Prostate gland (tissue), 2 donors: ENCODE measurements at regions of chr16 and their contacts with region 1.

Region 1: DNA sequence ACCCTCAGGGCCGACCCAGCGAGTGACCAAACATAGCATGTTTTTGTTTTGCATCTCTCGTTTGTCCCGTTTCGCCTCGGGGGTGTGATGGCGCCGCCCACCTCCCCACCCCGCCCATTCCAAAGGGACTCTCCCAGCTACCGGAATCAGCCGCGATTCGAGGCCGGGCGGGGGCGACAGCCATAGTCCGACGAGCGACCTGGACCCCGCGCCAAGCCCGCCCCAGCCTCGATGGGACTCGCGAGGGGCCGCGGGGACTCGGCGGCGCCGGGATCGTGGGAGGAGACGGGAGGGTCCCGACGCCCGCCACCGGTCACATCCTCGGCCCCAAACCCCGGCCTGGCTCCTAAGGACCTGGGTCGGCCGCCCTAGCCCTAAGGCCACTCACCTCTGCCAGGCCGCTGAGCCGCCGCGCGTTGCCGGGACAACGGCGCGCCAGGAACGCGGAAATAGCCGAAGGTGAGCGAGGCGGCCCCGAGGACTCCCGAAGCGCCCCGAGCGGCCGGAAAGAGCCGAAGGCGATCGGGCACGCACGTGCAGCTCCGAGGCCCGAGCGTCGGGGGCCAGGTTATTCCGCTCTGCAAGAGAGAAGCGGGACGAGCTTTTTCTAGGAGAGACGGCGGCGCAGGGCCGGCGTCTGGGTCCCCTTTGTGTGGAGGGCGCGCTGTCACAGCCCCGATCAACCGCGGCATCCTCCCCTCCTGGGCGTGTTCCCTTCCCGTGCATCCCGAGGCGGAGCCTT is 1.4 kb downstream of the IFT140 start:
- DNase-seq: peak; percentile 88
- H3K4me3 ChIP-seq: peak overlapping the region; percentile 77 to 84
- H3K27ac ChIP-seq: peak overlapping the region; percentile 81 to 83
- H3K4me1 ChIP-seq: peaks cover 5% of the 10 kb centered on the region
- H3K27me3 ChIP-seq: no peaks in the 10 kb centered on the region
- CTCF ChIP-seq: no peak
- POLR2A ChIP-seq: peak; percentile 17

Region 2: GRCh38 chr16:1413684-1414531 is 196.5 kb before region 1 on chr16:
- intact Hi-C with region 1: loop called (anchors 10 kb)
- DNase-seq: no peak
- H3K4me3 ChIP-seq: peak overlapping the region; percentile 95 to 98
- H3K27ac ChIP-seq: peak overlapping the region; percentile 84 to 87
- H3K4me1 ChIP-seq: no peaks in the 10 kb centered on the region
- H3K27me3 ChIP-seq: no peaks in the 10 kb centered on the region
- CTCF ChIP-seq: peak; percentile 25 to 60 (median 47)
- POLR2A ChIP-seq: no peak

Region 3: GRCh38 chr16:1474796-1475551 is 135.5 kb before region 1 on chr16 and contains the start of gene CLCN7:
- intact Hi-C with region 1: loop called (anchors 5 kb)
- DNase-seq: peak; percentile 90
- H3K4me3 ChIP-seq: peak within 1 kb of the TSS; percentile 90 to 99
- H3K27ac ChIP-seq: peak within 1 kb of the TSS; percentile 81 to 86
- H3K4me1 ChIP-seq: peaks cover 7% of the 10 kb centered on the region
- H3K27me3 ChIP-seq: no peaks in the 10 kb centered on the region
- CTCF ChIP-seq: peak in 1 of 4 experiments; percentile 7
- POLR2A ChIP-seq: peak; percentile 78
- total RNA-seq, gene CLCN7: 51.9 to 108 TPM

Region 4: GRCh38 chr16:1492923-1493745 is 117.3 kb before region 1 on chr16 and contains the start of gene TELO2:
- intact Hi-C with region 1: loop called (anchors 5 kb)
- DNase-seq: peak; percentile 82
- H3K4me3 ChIP-seq: peak within 1 kb of the TSS; percentile 71 to 85
- H3K27ac ChIP-seq: peak within 1 kb of the TSS; percentile 75 to 83
- H3K4me1 ChIP-seq: peaks cover 8% of the 10 kb centered on the region
- H3K27me3 ChIP-seq: no peaks in the 10 kb centered on the region
- CTCF ChIP-seq: peak in 1 of 4 experiments; percentile 5
- POLR2A ChIP-seq: peak; percentile 41
- total RNA-seq, gene TELO2: 35.1 to 53.5 TPM

Region 5: GRCh38 chr16:1533443-1533951 is 77.0 kb before region 1 on chr16 and contains the start of gene TMEM204:
- intact Hi-C with region 1: loop called (anchors 5 kb)
- DNase-seq: no peak
- H3K4me3 ChIP-seq: peak within 1 kb of the TSS; percentile 36 to 39
- H3K27ac ChIP-seq: peak within 1 kb of the TSS; percentile 81 to 87
- H3K4me1 ChIP-seq: no peaks in the 10 kb centered on the region
- H3K27me3 ChIP-seq: no peaks in the 10 kb centered on the region
- CTCF ChIP-seq: no peak
- POLR2A ChIP-seq: no peak
- total RNA-seq, gene TMEM204: 20.7 to 33.9 TPM

Region 6: GRCh38 chr16:1564325-1564724 is 46.1 kb before region 1 on chr16:
- intact Hi-C with region 1: no loop called
- DNase-seq: no peak
- H3K4me3 ChIP-seq: no peak overlapping the region
- H3K27ac ChIP-seq: no peak overlapping the region
- H3K4me1 ChIP-seq: no peaks in the 10 kb centered on the region
- H3K27me3 ChIP-seq: no peaks in the 10 kb centered on the region
- CTCF ChIP-seq: peak in 1 of 4 experiments; percentile 25
- POLR2A ChIP-seq: no peak

Region 7: DNA sequence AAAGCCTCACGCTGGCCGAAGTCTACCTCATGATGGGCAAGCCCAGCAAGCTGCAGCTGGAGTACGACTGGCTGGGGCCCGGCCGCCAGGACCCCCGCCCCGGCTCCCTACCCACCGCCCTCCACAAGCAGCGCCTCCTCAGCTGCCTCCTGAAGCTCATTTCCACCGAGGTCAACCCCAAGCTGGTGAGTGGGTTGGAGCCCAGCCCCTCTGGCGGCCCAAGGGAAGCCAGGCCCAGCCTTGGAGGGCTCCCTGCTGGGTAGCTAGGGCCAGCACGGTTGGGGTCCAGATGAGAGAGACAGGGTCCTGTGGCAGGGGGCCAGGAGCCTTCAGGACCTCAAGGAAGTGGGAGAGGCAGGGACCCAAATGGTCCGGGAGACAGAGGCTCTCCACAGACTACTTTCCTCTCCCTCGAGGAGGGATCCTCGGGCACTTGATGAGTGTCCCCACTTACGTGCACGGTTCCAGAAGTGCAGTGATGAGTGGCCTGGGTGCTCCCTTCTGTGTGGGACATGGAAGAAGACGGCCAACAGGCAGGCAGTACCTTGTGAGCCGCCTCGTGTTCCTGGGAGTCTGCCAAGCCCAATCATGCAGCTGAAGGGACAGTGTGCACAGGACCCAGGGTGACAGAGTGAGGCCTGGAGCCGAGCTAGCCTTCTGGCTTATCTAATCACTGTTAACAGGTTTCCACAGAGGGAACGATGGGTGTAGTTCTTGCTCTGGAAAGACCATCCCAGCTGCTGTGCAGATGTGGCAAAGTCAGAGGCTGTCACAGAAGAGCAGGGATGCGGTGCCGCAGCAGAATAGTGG is 46.6 kb after region 1 on chr16:
- intact Hi-C with region 1: no loop called
- DNase-seq: no peak
- H3K4me3 ChIP-seq: no peak overlapping the region
- H3K27ac ChIP-seq: peak overlapping the region in 1 of 2 donors; percentile 19
- H3K4me1 ChIP-seq: no peaks in the 10 kb centered on the region
- H3K27me3 ChIP-seq: no peaks in the 10 kb centered on the region
- CTCF ChIP-seq: no peak
- POLR2A ChIP-seq: no peak

Region 8: GRCh38 chr16:1705688-1706385 is 95.4 kb after region 1 on chr16 and contains the start of gene MAPK8IP3:
- intact Hi-C with region 1: loop called (anchors 10 kb)
- DNase-seq: peak; percentile 87
- H3K4me3 ChIP-seq: peak within 1 kb of the TSS; percentile 47 to 87
- H3K27ac ChIP-seq: peak within 1 kb of the TSS; percentile 80 to 88
- H3K4me1 ChIP-seq: peaks cover 16% of the 10 kb centered on the region
- H3K27me3 ChIP-seq: no peaks in the 10 kb centered on the region
- CTCF ChIP-seq: peak; percentile 98 to 100 (median 100)
- POLR2A ChIP-seq: peak; percentile 94
- total RNA-seq, gene MAPK8IP3: 56.0 to 157 TPM